ENCODE measurements at regions of chr15 and their contacts with region 1.

Region 1: DNA sequence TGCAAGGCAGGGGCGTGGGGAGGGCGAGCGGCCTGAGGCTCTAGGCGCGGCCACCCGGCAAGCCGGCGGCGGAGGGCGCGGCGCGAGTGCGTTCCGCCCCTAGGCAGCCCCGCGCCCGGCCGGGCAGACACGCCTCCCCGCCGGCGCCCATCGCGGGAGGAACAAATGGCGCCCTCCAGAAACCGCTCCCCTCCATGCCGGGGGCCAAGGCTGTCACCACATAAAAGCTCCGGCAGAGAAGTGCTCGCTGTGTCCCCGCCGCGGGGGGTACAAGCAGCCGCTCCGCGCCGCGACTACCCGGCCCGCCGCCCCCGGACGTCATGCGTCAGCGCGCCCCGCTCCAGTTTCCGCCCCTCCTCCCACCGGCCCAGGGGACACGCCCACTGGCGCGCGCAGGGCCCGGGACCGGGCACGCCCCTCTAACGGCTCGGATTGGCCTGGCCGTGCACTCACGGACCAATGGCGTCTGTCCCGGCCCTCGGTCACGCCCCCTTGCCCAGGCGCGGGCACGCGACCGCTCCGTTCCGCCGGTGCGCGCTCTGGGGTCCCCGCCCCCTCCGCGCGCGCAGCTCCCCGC is 391 bp upstream of the KLF13 start:
- DNase-seq: peak; percentile 92
- ATAC-seq: peak; percentile 78
- H3K4me3 ChIP-seq: peak overlapping the region; percentile 79
- H3K27ac ChIP-seq: peak overlapping the region; percentile 97
- H3K4me1 ChIP-seq: peaks cover 33% of the 10 kb centered on the region
- H3K27me3 ChIP-seq: no peaks in the 10 kb centered on the region
- CTCF ChIP-seq: no peak
- EP300 ChIP-seq: peak in 1 of 2 experiments; percentile 23; a peak in 2 of 4 replicates
- POLR2A ChIP-seq: peak; percentile 75
- RAD21 ChIP-seq: peak; percentile 22; the same call in 1 of the 2 replicates

Region 2: GRCh38 chr15:30650012-30650929 is 676.0 kb before region 1 on chr15:
- CTCF ChIA-PET with region 1: no interaction called
- POLR2A ChIA-PET with region 1: no interaction called
- RAD21 ChIA-PET with region 1: no interaction called
- SMC1A ChIA-PET with region 1: no interaction called
- in situ Hi-C with region 1: loop called (anchors 25 kb)
- intact Hi-C with region 1: no loop called
- DNase-seq: peak; percentile 69
- ATAC-seq: peak; percentile 100
- H3K4me3 ChIP-seq: no peak overlapping the region
- H3K27ac ChIP-seq: peak overlapping the region; percentile 58
- H3K4me1 ChIP-seq: peaks cover 20% of the 10 kb centered on the region
- H3K27me3 ChIP-seq: no peaks in the 10 kb centered on the region
- CTCF ChIP-seq: no peak
- EP300 ChIP-seq: no peak
- POLR2A ChIP-seq: no peak
- RAD21 ChIP-seq: no peak

Region 3: DNA sequence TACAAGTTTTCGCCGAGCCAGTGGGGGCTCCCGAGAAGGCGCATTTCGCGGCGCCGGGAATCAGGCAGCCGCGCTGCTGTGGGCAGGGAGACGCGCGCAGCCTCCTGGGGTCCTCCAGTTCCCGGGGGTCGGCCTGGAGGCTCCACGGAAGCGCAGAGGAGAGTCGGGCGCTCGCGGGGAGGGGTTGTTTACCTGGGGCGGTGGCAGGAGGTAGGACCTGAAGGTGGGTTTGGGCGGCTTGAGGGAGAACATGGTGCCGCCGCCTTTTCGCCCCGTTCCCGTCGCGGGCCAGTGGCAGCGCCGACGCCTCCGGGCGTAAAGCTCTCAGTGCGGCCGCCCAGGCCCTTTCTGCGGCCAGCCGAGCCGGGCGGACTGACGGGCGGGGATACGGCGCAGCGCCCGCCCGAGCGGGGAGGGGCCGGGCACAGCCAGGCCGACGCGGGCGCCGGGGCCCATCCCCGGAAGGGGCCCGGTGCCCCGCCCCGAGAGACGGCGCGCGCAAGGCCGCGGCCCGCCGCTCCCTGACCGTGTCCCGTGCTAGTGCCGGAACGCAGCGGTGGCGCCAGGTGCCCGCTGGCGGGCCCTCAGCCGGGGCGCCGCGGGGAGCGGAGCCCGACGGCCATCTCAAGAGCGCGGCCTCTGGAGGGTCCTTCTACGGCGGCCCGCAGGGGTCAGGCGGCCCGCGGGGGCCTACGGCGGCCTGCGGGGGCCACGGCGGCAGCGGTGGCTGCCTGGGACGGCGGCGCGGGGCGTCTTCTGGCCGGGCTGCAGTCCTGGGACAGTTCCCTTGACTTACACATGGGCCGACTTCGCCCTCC is 334.8 kb before region 1 on chr15 and contains the start of gene MTMR10:
- CTCF ChIA-PET with region 1: no interaction called
- POLR2A ChIA-PET with region 1: no interaction called
- RAD21 ChIA-PET with region 1: no interaction called
- SMC1A ChIA-PET with region 1: no interaction called
- in situ Hi-C with region 1: no loop called
- intact Hi-C with region 1: no loop called
- DNase-seq: no peak
- ATAC-seq: peak; percentile 96
- H3K4me3 ChIP-seq: peak within 1 kb of the TSS; percentile 99
- H3K27ac ChIP-seq: peak within 1 kb of the TSS; percentile 78
- H3K4me1 ChIP-seq: peaks cover 5% of the 10 kb centered on the region; the same call in 1 of the 2 replicates
- H3K27me3 ChIP-seq: no peaks in the 10 kb centered on the region
- CTCF ChIP-seq: no peak
- EP300 ChIP-seq: no peak
- POLR2A ChIP-seq: peak; percentile 94
- RAD21 ChIP-seq: 0 out of 2 replicates have a peak, but pooled peaks have one; percentile 4
- polyA plus RNA-seq, gene MTMR10: 1.9 to 3.6 TPM

Region 4: DNA sequence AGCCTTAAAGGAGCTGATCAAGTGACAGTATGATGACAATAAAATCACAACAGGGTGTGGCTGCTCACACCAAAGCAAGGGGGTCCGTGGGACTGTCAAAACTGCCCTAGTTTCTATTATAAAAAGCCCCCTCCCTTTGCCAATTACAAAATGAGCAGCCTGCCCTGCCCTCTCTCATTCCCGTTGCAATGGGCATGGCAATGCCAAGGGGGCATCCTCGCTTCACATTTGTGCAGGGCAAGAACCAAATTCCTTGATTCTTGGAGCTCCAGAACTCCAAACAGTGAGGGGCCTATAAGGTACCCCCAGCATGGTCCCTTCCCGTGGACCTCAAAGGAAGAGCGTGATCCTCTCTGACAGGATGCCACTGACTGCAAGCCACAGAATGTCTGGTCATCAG is 119.9 kb before region 1 on chr15:
- CTCF ChIA-PET with region 1: interaction called, 3 read pairs
- POLR2A ChIA-PET with region 1: interaction called, 5 read pairs
- RAD21 ChIA-PET with region 1: interaction called, 15 read pairs
- SMC1A ChIA-PET with region 1: interaction called, 11 read pairs
- in situ Hi-C with region 1: no loop called
- intact Hi-C with region 1: no loop called
- DNase-seq: no peak
- ATAC-seq: no peak
- H3K4me3 ChIP-seq: no peak overlapping the region
- H3K27ac ChIP-seq: no peak overlapping the region
- H3K4me1 ChIP-seq: peaks cover 10% of the 10 kb centered on the region
- H3K27me3 ChIP-seq: no peaks in the 10 kb centered on the region
- CTCF ChIP-seq: no peak
- EP300 ChIP-seq: no peak
- POLR2A ChIP-seq: no peak
- RAD21 ChIP-seq: no peak

Region 5: GRCh38 chr15:31254431-31255175 is 71.6 kb before region 1 on chr15:
- CTCF ChIA-PET with region 1: interaction called, 3 read pairs
- POLR2A ChIA-PET with region 1: interaction called, 13 read pairs
- RAD21 ChIA-PET with region 1: interaction called, 39 read pairs
- SMC1A ChIA-PET with region 1: interaction called, 3 read pairs
- in situ Hi-C with region 1: no loop called
- intact Hi-C with region 1: loop called (anchors 2 kb)
- DNase-seq: no peak
- ATAC-seq: no peak
- H3K4me3 ChIP-seq: no peak overlapping the region
- H3K27ac ChIP-seq: peak overlapping the region; percentile 76
- H3K4me1 ChIP-seq: peaks cover 38% of the 10 kb centered on the region
- H3K27me3 ChIP-seq: no peaks in the 10 kb centered on the region
- CTCF ChIP-seq: no peak
- EP300 ChIP-seq: no peak
- POLR2A ChIP-seq: no peak
- RAD21 ChIP-seq: no peak

Region 6: DNA sequence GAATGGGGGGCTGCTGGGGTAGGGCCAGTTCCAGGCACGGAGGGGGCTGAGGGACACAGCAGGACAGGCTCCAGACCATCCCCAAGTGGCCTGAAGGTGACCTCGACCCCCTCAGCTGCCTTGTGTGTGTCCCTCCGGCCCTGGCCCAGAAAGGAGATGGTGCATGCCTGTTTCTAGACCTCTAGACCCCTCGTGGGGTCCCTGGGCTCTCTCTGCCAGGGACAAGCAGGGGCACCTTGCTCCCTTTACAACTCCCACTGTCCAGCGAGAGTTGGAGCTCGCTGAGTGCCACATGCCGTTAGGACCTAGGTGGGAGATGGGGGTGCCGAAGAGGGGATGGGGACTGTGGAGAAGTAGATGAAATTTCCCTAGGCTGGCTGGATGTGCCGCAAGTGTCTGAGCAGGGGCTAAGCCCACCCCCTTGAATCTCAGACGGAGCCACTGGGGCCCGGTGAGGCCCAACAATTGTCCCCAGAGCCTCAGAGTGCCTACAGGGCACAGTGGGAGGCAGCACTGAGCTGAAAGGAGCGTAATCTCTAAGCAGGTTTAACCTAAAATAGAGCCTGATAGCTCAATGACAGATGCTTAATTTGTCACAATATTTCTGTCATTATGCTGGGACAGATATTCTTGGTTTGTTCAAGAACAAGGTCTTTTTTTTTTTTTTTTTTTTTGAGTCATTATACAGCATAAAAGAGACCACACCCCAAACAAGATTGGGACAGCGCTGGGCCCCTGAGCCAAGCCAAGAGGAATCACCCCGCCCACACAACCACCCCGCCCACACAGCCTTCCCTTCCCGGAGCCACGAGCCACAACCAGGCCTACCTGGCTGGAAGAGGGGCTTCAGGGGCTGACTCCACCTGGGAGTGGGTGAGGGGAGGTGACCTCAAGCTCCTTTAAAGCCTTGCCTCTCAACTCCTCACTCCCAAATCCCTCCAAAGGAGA is 23.2 kb before region 1 on chr15:
- CTCF ChIA-PET with region 1: interaction called, 3 read pairs
- POLR2A ChIA-PET with region 1: interaction called, 12 read pairs
- RAD21 ChIA-PET with region 1: interaction called, 10 read pairs
- SMC1A ChIA-PET with region 1: interaction called, 7 read pairs
- in situ Hi-C with region 1: no loop called
- intact Hi-C with region 1: no loop called
- DNase-seq: no peak
- ATAC-seq: peak; percentile 76
- H3K4me3 ChIP-seq: no peak overlapping the region
- H3K27ac ChIP-seq: no peak overlapping the region
- H3K4me1 ChIP-seq: peaks cover 19% of the 10 kb centered on the region
- H3K27me3 ChIP-seq: no peaks in the 10 kb centered on the region
- CTCF ChIP-seq: peak; percentile 19 to 34 (median 31); a peak in 5 of 6 replicates
- EP300 ChIP-seq: no peak
- POLR2A ChIP-seq: no peak
- RAD21 ChIP-seq: peak; percentile 40; the same call in 1 of the 2 replicates

Region 7: GRCh38 chr15:31352911-31353811 is 26.9 kb after region 1 on chr15:
- CTCF ChIA-PET with region 1: interaction called, 4 read pairs
- POLR2A ChIA-PET with region 1: interaction called, 16 read pairs
- RAD21 ChIA-PET with region 1: interaction called, 19 read pairs
- SMC1A ChIA-PET with region 1: interaction called, 8 read pairs
- in situ Hi-C with region 1: no loop called
- intact Hi-C with region 1: no loop called
- DNase-seq: peak; percentile 83
- ATAC-seq: peak; percentile 87
- H3K4me3 ChIP-seq: peak overlapping the region; percentile 52; the same call in 1 of the 2 replicates
- H3K27ac ChIP-seq: peak overlapping the region; percentile 93
- H3K4me1 ChIP-seq: peaks cover 89% of the 10 kb centered on the region
- H3K27me3 ChIP-seq: no peaks in the 10 kb centered on the region
- CTCF ChIP-seq: peak in 2 of 3 experiments; percentile 7 to 22; a peak in 2 of 6 replicates
- EP300 ChIP-seq: peak; percentile 57 to 70; a peak in 3 of 4 replicates
- POLR2A ChIP-seq: peak; percentile 48; the same call in 1 of the 2 replicates
- RAD21 ChIP-seq: no peak